ENCODE measurements at regions of chr14 and their contacts with region 1.

Region 1: DNA sequence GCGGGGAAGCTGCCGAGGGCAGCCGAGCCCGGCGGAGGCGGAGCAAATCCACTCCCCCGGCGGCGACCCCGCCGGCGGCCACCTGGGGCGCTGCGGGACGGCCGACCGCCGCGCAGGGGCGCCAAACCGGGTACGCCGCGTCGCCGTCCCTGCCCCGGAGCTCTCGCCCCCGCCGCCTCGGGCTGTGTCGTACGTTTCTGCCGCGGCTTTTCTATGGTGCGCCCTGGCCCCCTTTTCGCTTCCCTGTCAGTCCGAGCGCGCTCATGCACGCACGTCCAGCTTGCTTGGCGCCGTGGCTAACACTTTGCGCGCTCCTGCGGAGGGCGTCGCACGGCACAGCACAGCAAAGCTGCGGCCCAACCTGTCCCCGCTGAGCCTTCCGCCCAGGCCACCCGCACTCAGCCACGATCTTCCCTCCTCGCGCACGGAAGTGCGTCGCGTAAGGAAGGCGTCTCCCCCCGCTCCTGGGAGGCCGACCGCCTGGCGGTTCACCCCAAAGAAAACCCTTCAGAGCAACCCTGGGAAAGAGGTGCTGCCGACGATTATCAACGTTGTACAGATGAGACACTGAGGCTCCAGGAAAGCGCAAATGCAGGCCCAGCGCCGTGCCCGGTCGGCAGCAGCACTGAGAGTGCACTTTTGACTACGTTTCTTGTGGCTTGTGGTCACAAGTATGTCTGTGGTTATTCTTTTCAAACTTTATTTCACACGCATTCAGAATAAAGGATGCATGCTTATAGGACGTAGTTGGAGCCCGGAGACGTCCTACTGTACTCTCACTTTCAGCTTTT is at the start of gene HECTD1:
- DNase-seq: peak; percentile 94
- H3K4me3 Mint-ChIP-seq: peak within 1 kb of the TSS; percentile 81
- H3K27ac Mint-ChIP-seq: peak within 1 kb of the TSS; percentile 96
- H3K4me1 Mint-ChIP-seq: peaks cover 18% of the 10 kb centered on the region
- H3K27me3 Mint-ChIP-seq: no peaks in the 10 kb centered on the region
- CTCF ChIP-seq: peak; percentile 82
- total RNA-seq, gene HECTD1: 98.6 and 105 TPM in 2 replicates

Region 2: GRCh38 chr14:31196839-31197492 is 11.0 kb before region 1 on chr14:
- CTCF ChIA-PET with region 1: interaction called, 4 read pairs
- intact Hi-C with region 1: loop called (anchors 1 kb)
- DNase-seq: no peak
- H3K4me3 Mint-ChIP-seq: no peak overlapping the region
- H3K27ac Mint-ChIP-seq: no peak overlapping the region
- H3K4me1 Mint-ChIP-seq: peaks cover 39% of the 10 kb centered on the region
- H3K27me3 Mint-ChIP-seq: no peaks in the 10 kb centered on the region
- CTCF ChIP-seq: no peak

Region 3: DNA sequence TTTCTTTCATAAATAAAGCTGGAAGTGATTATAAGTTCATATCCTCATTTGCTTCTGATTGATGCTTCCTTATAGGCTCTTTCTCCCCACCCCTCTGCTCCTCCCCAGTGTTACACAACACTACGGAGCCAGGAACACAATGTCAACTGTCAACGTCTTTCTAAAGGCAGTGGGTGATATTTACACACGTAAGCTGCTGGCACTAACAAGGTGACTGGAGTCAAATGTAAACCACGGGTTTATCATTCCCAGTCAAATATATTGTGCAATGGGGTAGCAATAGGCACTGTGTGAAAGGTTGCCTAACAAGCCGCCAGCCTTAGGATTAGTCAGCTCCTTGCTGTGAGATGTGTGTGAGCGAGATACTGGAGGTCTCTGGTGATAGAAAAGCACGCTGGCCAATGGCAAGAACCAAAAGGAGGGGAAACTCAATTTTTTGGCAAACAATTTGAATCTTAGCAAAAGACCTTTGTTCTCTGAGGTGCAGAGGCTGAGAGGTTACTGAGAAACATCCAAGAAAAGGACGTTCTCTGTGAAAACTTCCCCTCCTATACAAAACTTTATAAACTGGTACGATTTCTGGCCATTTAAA is 21.8 kb after region 1 on chr14:
- CTCF ChIA-PET with region 1: interaction called, 10 read pairs
- intact Hi-C with region 1: no loop called
- DNase-seq: peak; percentile 81
- H3K4me3 Mint-ChIP-seq: peak overlapping the region; percentile 14
- H3K27ac Mint-ChIP-seq: peak overlapping the region; percentile 91
- H3K4me1 Mint-ChIP-seq: peaks cover 17% of the 10 kb centered on the region
- H3K27me3 Mint-ChIP-seq: no peaks in the 10 kb centered on the region
- CTCF ChIP-seq: no peak

Region 4: GRCh38 chr14:31263485-31264133 is 55.7 kb after region 1 on chr14:
- CTCF ChIA-PET with region 1: interaction called, 6 read pairs
- intact Hi-C with region 1: loop called (anchors 2 kb)
- DNase-seq: peak; percentile 83
- H3K4me3 Mint-ChIP-seq: peak overlapping the region; percentile 2
- H3K27ac Mint-ChIP-seq: peak overlapping the region; percentile 83
- H3K4me1 Mint-ChIP-seq: peaks cover 34% of the 10 kb centered on the region
- H3K27me3 Mint-ChIP-seq: no peaks in the 10 kb centered on the region
- CTCF ChIP-seq: no peak

Region 5: GRCh38 chr14:31326111-31326510 is 118.2 kb after region 1 on chr14:
- CTCF ChIA-PET with region 1: interaction called, 3 read pairs
- intact Hi-C with region 1: loop called (anchors 10 kb)
- DNase-seq: peak; percentile 25
- H3K4me3 Mint-ChIP-seq: no peak overlapping the region
- H3K27ac Mint-ChIP-seq: no peak overlapping the region
- H3K4me1 Mint-ChIP-seq: no peaks in the 10 kb centered on the region
- H3K27me3 Mint-ChIP-seq: no peaks in the 10 kb centered on the region
- CTCF ChIP-seq: no peak

Region 6: GRCh38 chr14:31357279-31357678 is 149.3 kb after region 1 on chr14:
- CTCF ChIA-PET with region 1: no interaction called
- intact Hi-C with region 1: loop called (anchors 5 kb)
- DNase-seq: no peak
- H3K4me3 Mint-ChIP-seq: no peak overlapping the region
- H3K27ac Mint-ChIP-seq: no peak overlapping the region
- H3K4me1 Mint-ChIP-seq: no peaks in the 10 kb centered on the region
- H3K27me3 Mint-ChIP-seq: no peaks in the 10 kb centered on the region
- CTCF ChIP-seq: no peak

Region 7: DNA sequence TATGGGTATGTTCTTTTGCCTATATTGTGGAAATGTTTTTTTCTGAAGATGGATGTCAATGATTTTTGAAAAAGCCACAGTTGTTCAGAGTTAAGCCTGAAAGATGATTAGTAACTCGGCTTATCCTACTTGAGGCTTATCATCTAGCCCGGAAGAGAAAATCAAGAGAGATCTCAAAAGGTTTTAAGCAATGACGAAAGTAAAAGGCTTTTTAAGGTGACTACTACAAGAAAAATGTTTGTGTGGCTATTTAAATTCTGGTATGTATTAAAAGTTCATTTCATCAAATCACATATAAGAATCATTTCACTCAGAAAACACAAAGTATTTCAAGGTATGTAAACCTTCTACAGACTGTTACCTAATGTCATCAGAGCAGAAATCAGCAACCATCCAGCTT is 172.2 kb after region 1 on chr14:
- CTCF ChIA-PET with region 1: no interaction called
- intact Hi-C with region 1: no loop called
- DNase-seq: no peak
- H3K4me3 Mint-ChIP-seq: no peak overlapping the region
- H3K27ac Mint-ChIP-seq: no peak overlapping the region
- H3K4me1 Mint-ChIP-seq: no peaks in the 10 kb centered on the region
- H3K27me3 Mint-ChIP-seq: no peaks in the 10 kb centered on the region
- CTCF ChIP-seq: no peak